SK-N-SH (cell line): ENCODE measurements at regions of chr14 and their contacts with region 1.

Region 1: DNA sequence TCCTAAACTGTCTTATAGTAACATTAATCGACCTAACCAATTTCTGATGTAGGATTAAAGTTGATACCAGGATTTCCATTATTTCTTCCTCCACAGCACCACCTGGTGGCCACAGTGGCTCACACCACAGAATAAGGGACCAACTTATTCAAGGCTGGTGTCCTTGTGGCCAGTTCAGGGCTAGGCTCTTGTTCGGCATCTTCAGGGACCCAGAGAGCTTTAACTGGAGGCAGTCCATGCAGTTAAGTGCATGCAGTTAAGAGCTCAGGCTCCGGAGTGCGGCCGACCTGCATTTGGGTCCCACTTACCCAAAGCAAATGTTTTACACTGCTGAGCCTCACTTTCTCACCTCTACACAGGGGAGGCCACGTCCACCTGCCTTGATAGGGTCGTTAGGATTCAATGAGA is 42.0 kb upstream of the GPR68 start:
- DNase-seq: peak; percentile 83
- H3K4me3 ChIP-seq: no peak overlapping the region; a peak in 1 of 4 replicates
- H3K27ac ChIP-seq: peak overlapping the region in 1 of 2 experiments; percentile 99; a peak in 2 of 4 replicates
- H3K4me1 ChIP-seq: peaks cover 20 to 37% of the 10 kb centered on the region in 2 experiments; a peak in 3 of 4 replicates
- H3K27me3 ChIP-seq: no peaks in the 10 kb centered on the region
- CTCF ChIP-seq: peak; percentile 90
- EP300 ChIP-seq: peak in 1 of 2 experiments; percentile 22; a peak in 1 of 4 replicates
- RAD21 ChIP-seq: peak; percentile 97

Region 2: GRCh38 chr14:90903101-90903500 is 383.4 kb before region 1 on chr14:
- CTCF ChIA-PET with region 1: interaction called, 44 read pairs
- POLR2A ChIA-PET with region 1: no interaction called
- DNase-seq: peak; percentile 69
- H3K4me3 ChIP-seq: no peak overlapping the region
- H3K27ac ChIP-seq: peak overlapping the region in 1 of 2 experiments; percentile 67; a peak in 2 of 4 replicates
- H3K4me1 ChIP-seq: no peaks in the 10 kb centered on the region; a peak in 1 of 4 replicates
- H3K27me3 ChIP-seq: no peaks in the 10 kb centered on the region
- CTCF ChIP-seq: peak; percentile 84
- EP300 ChIP-seq: no peak
- RAD21 ChIP-seq: peak; percentile 93

Region 3: GRCh38 chr14:91170504-91171121 is 115.9 kb before region 1 on chr14:
- CTCF ChIA-PET with region 1: interaction called, 391 read pairs
- POLR2A ChIA-PET with region 1: interaction called, 10 read pairs
- DNase-seq: peak; percentile 51
- H3K4me3 ChIP-seq: no peak overlapping the region
- H3K27ac ChIP-seq: peak overlapping the region; percentile 16 to 99; a peak in 3 of 4 replicates
- H3K4me1 ChIP-seq: peaks cover 0 to 42% of the 10 kb centered on the region in 2 experiments; a peak in 1 of 4 replicates
- H3K27me3 ChIP-seq: no peaks in the 10 kb centered on the region
- CTCF ChIP-seq: no peak
- EP300 ChIP-seq: peak in 1 of 2 experiments; percentile 39; a peak in 2 of 4 replicates
- RAD21 ChIP-seq: no peak; the same call in 1 of the 2 replicates

Region 4: DNA sequence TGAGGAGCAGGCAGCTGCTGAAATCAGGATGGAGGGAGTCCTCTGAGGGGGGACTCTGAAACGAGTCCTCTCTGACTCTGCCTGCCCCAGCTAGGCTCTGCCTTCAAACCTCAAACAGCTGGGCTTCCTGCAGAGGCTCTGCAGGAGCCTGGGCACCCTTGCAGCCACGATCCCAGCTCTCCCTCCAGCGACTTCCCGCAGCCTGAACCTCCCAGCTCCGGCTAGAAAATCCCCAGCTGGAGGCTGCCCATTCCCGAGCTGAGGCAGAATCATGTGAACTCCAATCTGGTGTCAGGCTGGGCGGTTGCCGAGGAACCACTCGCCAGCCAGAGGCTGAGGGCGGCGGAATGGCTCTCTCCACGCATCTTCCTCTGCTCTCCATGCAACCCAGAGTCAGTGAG is 42.0 kb before region 1 on chr14 and contains the start of gene GPR68:
- CTCF ChIA-PET with region 1: interaction called, 61 read pairs
- POLR2A ChIA-PET with region 1: interaction called, 13 read pairs
- DNase-seq: peak; percentile 79
- H3K4me3 ChIP-seq: peak within 1 kb of the TSS in 1 of 2 experiments; percentile 1; a peak in 1 of 4 replicates
- H3K27ac ChIP-seq: peak within 1 kb of the TSS in 1 of 2 experiments; percentile 83; a peak in 2 of 4 replicates
- H3K4me1 ChIP-seq: peaks cover 7 to 48% of the 10 kb centered on the region in 2 experiments; a peak in 2 of 4 replicates
- H3K27me3 ChIP-seq: no peaks in the 10 kb centered on the region
- CTCF ChIP-seq: no peak
- EP300 ChIP-seq: no peak
- RAD21 ChIP-seq: peak; percentile 22; the same call in 1 of the 2 replicates
- polyA plus RNA-seq, gene GPR68: 0.18 and 0.62 TPM in 2 replicates

Region 5: DNA sequence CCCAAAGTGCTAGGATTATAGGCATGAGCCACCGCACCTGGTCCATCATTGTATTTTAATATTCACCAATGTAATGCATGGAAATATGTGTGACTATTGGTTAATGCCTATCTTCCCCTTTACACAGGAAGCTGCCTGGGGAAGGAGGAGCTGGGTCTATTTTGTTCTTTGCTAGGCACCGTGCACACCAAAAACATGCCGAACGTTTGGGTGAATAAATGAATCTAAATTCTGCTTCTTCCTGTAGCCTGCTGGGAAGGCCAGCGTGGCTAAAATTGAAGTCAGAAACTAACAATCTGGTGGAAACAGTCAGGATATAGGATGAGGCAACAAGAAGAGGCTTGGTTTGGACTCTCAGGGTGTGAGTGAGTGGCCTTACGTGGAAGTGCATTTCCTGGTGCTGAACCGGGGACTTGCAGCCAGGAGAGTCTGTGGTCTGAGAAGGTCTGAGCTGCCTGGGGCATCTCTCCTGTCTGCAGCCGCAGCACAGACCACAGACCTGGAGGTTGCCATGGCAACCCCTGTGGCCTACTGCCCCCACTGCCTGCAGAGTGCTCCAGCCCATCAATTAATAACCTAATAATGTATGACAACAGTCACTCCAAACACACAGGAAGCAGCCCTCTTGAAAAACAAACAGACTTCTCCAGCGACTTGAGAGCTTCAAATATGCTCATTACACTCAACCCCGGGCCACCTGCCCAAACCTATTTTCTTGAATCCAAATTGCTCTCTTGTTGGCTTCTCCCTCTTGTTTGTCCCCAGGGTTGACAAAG is 36.5 kb before region 1 on chr14:
- CTCF ChIA-PET with region 1: interaction called, 61 read pairs
- POLR2A ChIA-PET with region 1: interaction called, 13 read pairs
- DNase-seq: peak; percentile 88
- H3K4me3 ChIP-seq: no peak overlapping the region
- H3K27ac ChIP-seq: peak overlapping the region; percentile 24 to 99; a peak in 3 of 4 replicates
- H3K4me1 ChIP-seq: peaks cover 0 to 68% of the 10 kb centered on the region in 2 experiments; a peak in 2 of 4 replicates
- H3K27me3 ChIP-seq: no peaks in the 10 kb centered on the region
- CTCF ChIP-seq: no peak
- EP300 ChIP-seq: peak in 1 of 2 experiments; percentile 90; a peak in 2 of 4 replicates
- RAD21 ChIP-seq: peak; percentile 48

Region 6: DNA sequence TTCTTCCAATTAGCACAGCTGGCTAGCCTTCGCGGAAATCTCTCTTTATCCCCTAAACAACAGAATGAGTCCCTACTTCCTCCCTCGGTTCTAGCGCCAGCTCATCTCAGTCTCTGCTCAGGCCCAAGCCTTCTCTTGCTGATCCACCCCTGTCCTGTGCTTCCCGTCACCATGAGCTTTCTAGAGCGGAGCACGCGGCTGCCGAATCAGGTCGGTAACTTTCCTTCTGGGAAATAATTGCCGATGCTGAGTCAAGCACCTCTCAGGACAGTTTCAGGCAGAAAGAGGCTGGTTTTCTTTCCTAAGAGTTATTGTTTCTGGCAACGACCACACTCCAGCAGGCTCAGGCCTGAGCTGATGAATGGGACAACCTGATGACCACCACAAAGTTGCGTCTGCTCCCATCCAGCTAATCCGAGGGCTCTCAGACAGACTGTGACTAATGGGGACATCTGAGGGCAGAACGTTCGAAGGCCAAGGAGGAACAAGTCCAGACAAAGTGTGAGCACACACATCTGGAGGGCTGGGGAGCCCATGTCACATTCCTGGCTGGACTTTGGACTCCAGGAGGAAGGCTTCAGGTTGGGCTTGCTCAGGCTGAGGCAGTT is 28.4 kb before region 1 on chr14:
- CTCF ChIA-PET with region 1: interaction called, 61 read pairs
- POLR2A ChIA-PET with region 1: interaction called, 17 read pairs
- DNase-seq: no peak
- H3K4me3 ChIP-seq: no peak overlapping the region
- H3K27ac ChIP-seq: peak overlapping the region in 1 of 2 experiments; percentile 97; a peak in 2 of 4 replicates
- H3K4me1 ChIP-seq: peaks cover 0 to 49% of the 10 kb centered on the region in 2 experiments; a peak in 2 of 4 replicates
- H3K27me3 ChIP-seq: no peaks in the 10 kb centered on the region
- CTCF ChIP-seq: no peak
- EP300 ChIP-seq: no peak
- RAD21 ChIP-seq: no peak